B cell (primary cell): ENCODE measurements at regions of chr14 and their contacts with region 1.

Region 1: DNA sequence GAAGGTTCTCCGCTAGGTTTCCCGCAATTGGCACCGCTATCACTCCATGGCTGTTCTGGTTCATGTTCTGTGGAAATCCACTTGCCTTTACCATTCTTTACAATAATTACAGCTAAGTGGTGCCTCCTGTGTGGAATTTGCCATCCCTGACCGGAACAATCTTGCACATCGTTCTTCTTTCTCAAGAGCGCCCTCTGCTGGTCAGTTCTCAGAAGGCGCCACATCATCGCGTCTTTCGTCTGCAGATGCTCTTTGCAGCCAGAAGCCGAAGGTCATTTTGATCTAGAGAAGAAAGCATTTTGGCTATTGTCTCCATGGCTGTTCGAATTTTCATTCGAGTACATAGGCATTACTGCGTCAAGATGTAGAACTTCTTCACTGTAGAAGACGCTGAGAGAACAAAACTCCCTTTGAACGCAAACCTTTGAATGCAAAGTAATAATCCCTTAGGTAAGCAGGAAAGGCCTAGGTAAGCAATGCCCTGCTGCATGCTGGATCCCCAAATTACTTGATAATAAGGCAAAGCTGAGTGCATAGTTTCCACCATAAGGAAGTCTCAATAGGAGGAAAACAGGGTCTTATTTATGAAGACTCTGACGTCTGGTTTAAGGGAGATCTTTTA is 10.1 kb upstream of the RTRAF start:
- DNase-seq: peak; percentile 83
- ATAC-seq: peak; percentile 66
- H3K4me3 ChIP-seq: no peak overlapping the region
- H3K4me3 Mint-ChIP-seq: no peak overlapping the region
- H3K27ac ChIP-seq: no peak overlapping the region
- H3K27ac Mint-ChIP-seq: no peak overlapping the region
- H3K4me1 ChIP-seq: peaks cover 5 to 6% of the 10 kb centered on the region in 2 donors
- H3K4me1 Mint-ChIP-seq: peaks cover 5% of the 10 kb centered on the region
- H3K27me3 ChIP-seq: no peaks in the 10 kb centered on the region
- H3K27me3 Mint-ChIP-seq: no peaks in the 10 kb centered on the region
- CTCF ChIP-seq: peak; percentile 96

Region 2: GRCh38 chr14:51283402-51284085 is 695.7 kb before region 1 on chr14:
- CTCF ChIA-PET with region 1: interaction called, 41 read pairs
- POLR2A ChIA-PET with region 1: no interaction called
- intact Hi-C with region 1: loop called (anchors 1 kb)
- DNase-seq: peak; percentile 57
- ATAC-seq: peak; percentile 43
- H3K4me3 ChIP-seq: no peak overlapping the region
- H3K4me3 Mint-ChIP-seq: no peak overlapping the region
- H3K27ac ChIP-seq: no peak overlapping the region
- H3K27ac Mint-ChIP-seq: no peak overlapping the region
- H3K4me1 ChIP-seq: no peaks in the 10 kb centered on the region
- H3K4me1 Mint-ChIP-seq: peaks cover 6% of the 10 kb centered on the region
- H3K27me3 ChIP-seq: no peaks in the 10 kb centered on the region
- H3K27me3 Mint-ChIP-seq: no peaks in the 10 kb centered on the region
- CTCF ChIP-seq: peak; percentile 90

Region 3: DNA sequence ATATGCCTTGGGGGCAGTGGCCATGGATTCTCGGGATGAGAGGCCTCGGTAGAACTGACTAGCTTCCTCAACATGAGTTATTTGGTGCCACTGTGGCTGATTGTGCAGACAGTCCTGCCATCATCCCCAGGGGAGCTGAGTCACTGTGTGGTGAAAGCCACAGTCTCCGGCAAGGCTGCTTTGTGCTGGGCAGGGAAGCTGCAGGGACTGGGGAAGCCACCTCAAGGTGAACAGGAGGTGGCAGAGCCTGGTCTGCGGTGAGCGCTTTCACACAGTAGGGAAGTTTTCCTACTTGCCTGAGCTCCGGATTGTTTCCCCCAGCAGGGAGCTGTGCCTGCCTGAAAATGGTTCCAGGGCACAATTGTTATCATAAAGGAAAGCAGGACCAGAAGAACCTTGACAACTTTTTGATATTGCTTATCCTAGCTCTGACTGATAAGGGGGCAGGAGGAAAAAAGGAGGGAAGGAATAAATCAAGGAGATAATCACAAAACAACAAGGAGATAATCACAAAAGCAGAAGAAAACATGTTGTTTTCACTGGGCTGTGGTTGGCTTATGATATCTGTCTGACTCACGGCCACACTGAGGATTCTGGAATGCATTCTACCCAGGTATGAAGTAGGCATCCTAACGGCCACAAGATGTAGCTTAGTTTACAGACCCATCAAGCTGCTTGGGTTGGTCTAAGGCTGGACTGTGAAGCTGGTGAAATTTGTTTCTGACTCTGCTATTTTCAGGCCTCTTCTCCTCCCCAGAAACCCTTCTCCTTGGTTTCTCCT is 151.0 kb before region 1 on chr14:
- CTCF ChIA-PET with region 1: interaction called, 37 read pairs
- POLR2A ChIA-PET with region 1: no interaction called
- intact Hi-C with region 1: loop called (anchors 1 kb)
- DNase-seq: peak; percentile 75
- ATAC-seq: peak; percentile 100
- H3K4me3 ChIP-seq: no peak overlapping the region
- H3K4me3 Mint-ChIP-seq: peak overlapping the region; percentile 20
- H3K27ac ChIP-seq: no peak overlapping the region
- H3K27ac Mint-ChIP-seq: peak overlapping the region; percentile 4
- H3K4me1 ChIP-seq: peaks cover 11 to 13% of the 10 kb centered on the region in 2 donors
- H3K4me1 Mint-ChIP-seq: no peaks in the 10 kb centered on the region
- H3K27me3 ChIP-seq: peaks cover 0 to 7% (median 2%) of the 10 kb centered on the region in 4 experiments
- H3K27me3 Mint-ChIP-seq: no peaks in the 10 kb centered on the region
- CTCF ChIP-seq: no peak

Region 4: GRCh38 chr14:51865953-51866747 is 113.0 kb before region 1 on chr14:
- CTCF ChIA-PET with region 1: interaction called, 21 read pairs
- POLR2A ChIA-PET with region 1: no interaction called
- intact Hi-C with region 1: no loop called
- DNase-seq: peak; percentile 79
- ATAC-seq: peak; percentile 62
- H3K4me3 ChIP-seq: no peak overlapping the region
- H3K4me3 Mint-ChIP-seq: no peak overlapping the region
- H3K27ac ChIP-seq: peak overlapping the region; percentile 34 to 67
- H3K27ac Mint-ChIP-seq: no peak overlapping the region
- H3K4me1 ChIP-seq: peaks cover 63 to 74% of the 10 kb centered on the region in 2 donors
- H3K4me1 Mint-ChIP-seq: peaks cover 52% of the 10 kb centered on the region
- H3K27me3 ChIP-seq: no peaks in the 10 kb centered on the region
- H3K27me3 Mint-ChIP-seq: no peaks in the 10 kb centered on the region
- CTCF ChIP-seq: no peak

Region 5: DNA sequence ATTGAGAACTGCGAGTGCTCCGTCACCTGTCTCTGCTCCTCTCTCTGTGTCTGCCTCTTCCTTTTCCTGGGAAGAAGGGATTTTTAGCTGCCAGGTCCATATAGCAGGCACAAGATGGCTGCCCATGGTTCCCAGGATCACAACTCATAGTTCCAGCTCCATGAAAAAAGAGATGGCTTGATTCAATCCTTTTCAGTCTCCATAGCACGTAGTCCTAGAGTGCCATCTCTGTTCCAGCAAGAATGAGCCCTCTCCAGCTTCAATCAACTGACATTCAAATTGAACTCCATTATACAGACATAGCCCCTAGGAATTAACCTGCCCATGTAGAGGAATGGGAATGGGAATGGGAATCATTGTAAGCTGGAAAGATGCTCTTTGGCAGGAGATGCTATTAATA is 24.5 kb before region 1 on chr14:
- CTCF ChIA-PET with region 1: interaction called, 11 read pairs
- POLR2A ChIA-PET with region 1: no interaction called
- intact Hi-C with region 1: no loop called
- DNase-seq: no peak
- ATAC-seq: no peak
- H3K4me3 ChIP-seq: no peak overlapping the region
- H3K4me3 Mint-ChIP-seq: no peak overlapping the region
- H3K27ac ChIP-seq: no peak overlapping the region
- H3K27ac Mint-ChIP-seq: no peak overlapping the region
- H3K4me1 ChIP-seq: no peaks in the 10 kb centered on the region
- H3K4me1 Mint-ChIP-seq: no peaks in the 10 kb centered on the region
- H3K27me3 ChIP-seq: no peaks in the 10 kb centered on the region
- H3K27me3 Mint-ChIP-seq: no peaks in the 10 kb centered on the region
- CTCF ChIP-seq: peak; percentile 9

Region 6: GRCh38 chr14:51989293-51990234 is 10.4 kb after region 1 on chr14 and contains the start of gene RTRAF:
- CTCF ChIA-PET with region 1: interaction called, 20 read pairs
- POLR2A ChIA-PET with region 1: no interaction called
- intact Hi-C with region 1: no loop called
- DNase-seq: peak; percentile 95
- ATAC-seq: peak; percentile 96
- H3K4me3 ChIP-seq: peak within 1 kb of the TSS; percentile 72 to 94 (median 77)
- H3K4me3 Mint-ChIP-seq: peak within 1 kb of the TSS; percentile 98
- H3K27ac ChIP-seq: peak within 1 kb of the TSS; percentile 67 to 95
- H3K27ac Mint-ChIP-seq: peak within 1 kb of the TSS; percentile 91
- H3K4me1 ChIP-seq: peaks cover 15 to 24% of the 10 kb centered on the region in 2 donors
- H3K4me1 Mint-ChIP-seq: peaks cover 34% of the 10 kb centered on the region
- H3K27me3 ChIP-seq: no peaks in the 10 kb centered on the region
- H3K27me3 Mint-ChIP-seq: no peaks in the 10 kb centered on the region
- CTCF ChIP-seq: no peak
- total RNA-seq, gene RTRAF: 91.1 and 94.2 TPM in 2 replicates